H1 (cell line): ENCODE measurements at regions of chr22 and their contacts with region 1.

Region 1: DNA sequence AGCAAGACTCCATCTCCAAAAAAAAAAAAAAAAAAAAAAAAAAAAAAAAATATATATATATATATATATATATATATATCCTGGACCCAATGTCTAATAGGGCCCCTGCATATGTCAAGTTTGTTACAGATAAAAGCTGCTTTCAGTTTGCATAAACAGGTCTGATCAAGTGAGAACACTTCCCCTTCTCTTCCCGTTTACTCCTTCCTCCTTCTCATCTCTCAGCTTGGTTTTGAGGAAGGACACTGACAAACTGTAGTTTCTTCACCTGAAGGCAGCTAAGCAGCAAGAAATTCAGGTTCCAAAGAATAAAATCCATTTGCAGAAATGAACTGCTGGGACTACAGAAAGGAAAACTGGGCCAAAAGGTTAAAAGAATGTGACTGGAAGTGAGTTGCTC is 11.7 kb downstream of the THOC5 start:
- DNase-seq: no peak
- H3K4me3 ChIP-seq: no peak overlapping the region
- H3K27ac ChIP-seq: no peak overlapping the region
- H3K4me1 ChIP-seq: no peaks in the 10 kb centered on the region
- H3K27me3 ChIP-seq: no peaks in the 10 kb centered on the region
- CTCF ChIP-seq: no peak
- EP300 ChIP-seq: no peak
- POLR2A ChIP-seq: no peak
- RAD21 ChIP-seq: no peak

Region 2: DNA sequence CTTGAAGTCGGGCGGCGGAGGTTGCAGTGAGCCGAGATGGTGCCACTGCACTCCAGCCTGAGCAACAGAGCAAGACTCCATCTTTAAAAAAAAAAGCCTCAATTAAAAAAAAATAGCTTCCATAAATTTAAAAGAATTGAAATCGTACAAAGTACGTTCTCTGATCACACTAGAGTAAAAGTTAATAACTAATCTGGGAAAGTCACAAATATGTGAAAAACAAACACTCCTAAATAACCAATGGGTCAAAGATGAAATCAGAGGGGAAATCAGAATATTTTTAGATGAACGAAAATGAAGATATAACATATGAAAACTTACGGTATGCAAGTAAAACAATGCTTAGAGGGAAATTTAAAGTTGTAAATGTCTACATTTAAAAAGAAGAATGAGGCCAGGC is 42.0 kb before region 1 on chr22:
- CTCF ChIA-PET with region 1: no interaction called
- POLR2A ChIA-PET with region 1: no interaction called
- DNase-seq: no peak
- H3K4me3 ChIP-seq: no peak overlapping the region
- H3K27ac ChIP-seq: no peak overlapping the region
- H3K4me1 ChIP-seq: no peaks in the 10 kb centered on the region
- H3K27me3 ChIP-seq: no peaks in the 10 kb centered on the region
- CTCF ChIP-seq: no peak
- EP300 ChIP-seq: no peak
- POLR2A ChIP-seq: no peak
- RAD21 ChIP-seq: no peak

Region 3: GRCh38 chr22:29530716-29531115 is 11.1 kb before region 1 on chr22:
- CTCF ChIA-PET with region 1: interaction called, 14 read pairs
- POLR2A ChIA-PET with region 1: interaction called, 10 read pairs
- DNase-seq: no peak
- H3K4me3 ChIP-seq: no peak overlapping the region
- H3K27ac ChIP-seq: no peak overlapping the region
- H3K4me1 ChIP-seq: no peaks in the 10 kb centered on the region
- H3K27me3 ChIP-seq: no peaks in the 10 kb centered on the region
- CTCF ChIP-seq: no peak
- EP300 ChIP-seq: no peak
- POLR2A ChIP-seq: no peak
- RAD21 ChIP-seq: no peak

Region 4: GRCh38 chr22:29621761-29622526 is 80.1 kb after region 1 on chr22:
- CTCF ChIA-PET with region 1: no interaction called
- POLR2A ChIA-PET with region 1: no interaction called
- DNase-seq: no peak
- H3K4me3 ChIP-seq: no peak overlapping the region
- H3K27ac ChIP-seq: no peak overlapping the region
- H3K4me1 ChIP-seq: peaks cover 0 to under 1% (median 0%) of the 10 kb centered on the region in 4 experiments; a peak in 2 of 7 replicates
- H3K27me3 ChIP-seq: no peaks in the 10 kb centered on the region
- CTCF ChIP-seq: no peak
- EP300 ChIP-seq: no peak
- POLR2A ChIP-seq: no peak
- RAD21 ChIP-seq: no peak